Activated CD4-positive, alpha-beta memory T cell treated with anti-CD3 and anti-CD28 coated beads for 36 hours (primary cell): ENCODE measurements at regions of chr5 and their contacts with region 1.

Region 1: GRCh38 chr5:36870399-36871040 is 6.0 kb upstream of the NIPBL start:
- DNase-seq: no peak
- H3K4me3 Mint-ChIP-seq: no peak overlapping the region
- H3K27ac Mint-ChIP-seq: peak overlapping the region; percentile 43
- H3K4me1 Mint-ChIP-seq: peaks cover 28% of the 10 kb centered on the region
- H3K27me3 Mint-ChIP-seq: no peaks in the 10 kb centered on the region

Region 2: GRCh38 chr5:36728697-36729543 is 141.6 kb before region 1 on chr5:
- CTCF ChIA-PET with region 1: interaction called, 8 read pairs
- POLR2A ChIA-PET with region 1: interaction called, 5 read pairs
- intact Hi-C with region 1: loop called (anchors 2 kb)
- DNase-seq: no peak
- H3K4me3 Mint-ChIP-seq: no peak overlapping the region
- H3K27ac Mint-ChIP-seq: no peak overlapping the region
- H3K4me1 Mint-ChIP-seq: peaks cover 4% of the 10 kb centered on the region
- H3K27me3 Mint-ChIP-seq: peaks cover 5% of the 10 kb centered on the region

Region 3: DNA sequence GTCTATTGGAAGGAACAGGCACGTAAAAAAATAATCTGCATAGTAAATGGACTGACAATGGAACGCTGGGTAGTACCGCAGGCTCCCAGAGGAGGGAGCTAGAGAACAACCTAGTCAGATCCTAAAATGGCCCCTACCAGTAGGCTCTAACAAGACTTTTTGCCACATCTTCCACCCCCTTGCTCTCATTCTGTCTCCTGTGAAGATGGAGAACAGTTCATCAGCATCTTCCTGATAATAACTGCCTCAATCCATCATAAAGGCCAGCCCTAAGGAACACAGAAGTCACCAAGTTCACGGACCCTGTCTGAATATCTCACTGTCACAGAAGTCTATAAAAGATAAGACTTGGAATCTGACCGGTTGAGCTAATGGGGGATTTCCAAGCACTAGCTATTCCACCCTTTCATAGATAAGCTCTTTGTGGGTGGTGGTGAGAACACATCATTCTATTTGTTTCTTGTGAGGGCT is 130.7 kb before region 1 on chr5:
- CTCF ChIA-PET with region 1: interaction called, 23 read pairs
- POLR2A ChIA-PET with region 1: interaction called, 3 read pairs
- intact Hi-C with region 1: loop called (anchors 1 kb)
- DNase-seq: peak; percentile 84
- H3K4me3 Mint-ChIP-seq: no peak overlapping the region
- H3K27ac Mint-ChIP-seq: no peak overlapping the region
- H3K4me1 Mint-ChIP-seq: peaks cover 4% of the 10 kb centered on the region
- H3K27me3 Mint-ChIP-seq: peaks cover 25% of the 10 kb centered on the region

Region 4: GRCh38 chr5:36744773-36745589 is 125.5 kb before region 1 on chr5:
- CTCF ChIA-PET with region 1: interaction called, 23 read pairs
- POLR2A ChIA-PET with region 1: interaction called, 3 read pairs
- intact Hi-C with region 1: loop called (anchors 1 kb)
- DNase-seq: peak; percentile 45
- H3K4me3 Mint-ChIP-seq: peak overlapping the region; percentile 78
- H3K27ac Mint-ChIP-seq: no peak overlapping the region
- H3K4me1 Mint-ChIP-seq: peaks cover 8% of the 10 kb centered on the region
- H3K27me3 Mint-ChIP-seq: peaks cover 43% of the 10 kb centered on the region

Region 5: GRCh38 chr5:36820900-36821299 is 49.6 kb before region 1 on chr5:
- CTCF ChIA-PET with region 1: no interaction called
- POLR2A ChIA-PET with region 1: no interaction called
- intact Hi-C with region 1: no loop called
- DNase-seq: no peak
- H3K4me3 Mint-ChIP-seq: no peak overlapping the region
- H3K27ac Mint-ChIP-seq: no peak overlapping the region
- H3K4me1 Mint-ChIP-seq: no peaks in the 10 kb centered on the region
- H3K27me3 Mint-ChIP-seq: peaks cover 17% of the 10 kb centered on the region

Region 6: GRCh38 chr5:36854402-36855140 is 15.9 kb before region 1 on chr5:
- CTCF ChIA-PET with region 1: no interaction called
- POLR2A ChIA-PET with region 1: no interaction called
- intact Hi-C with region 1: no loop called
- DNase-seq: no peak
- H3K4me3 Mint-ChIP-seq: no peak overlapping the region
- H3K27ac Mint-ChIP-seq: no peak overlapping the region
- H3K4me1 Mint-ChIP-seq: no peaks in the 10 kb centered on the region
- H3K27me3 Mint-ChIP-seq: peaks cover 7% of the 10 kb centered on the region

Region 7: GRCh38 chr5:36944607-36945225 is 74.2 kb after region 1 on chr5:
- CTCF ChIA-PET with region 1: interaction called, 14 read pairs
- POLR2A ChIA-PET with region 1: interaction called, 3 read pairs
- intact Hi-C with region 1: loop called (anchors 2 kb)
- DNase-seq: no peak
- H3K4me3 Mint-ChIP-seq: no peak overlapping the region
- H3K27ac Mint-ChIP-seq: no peak overlapping the region
- H3K4me1 Mint-ChIP-seq: peaks cover 40% of the 10 kb centered on the region
- H3K27me3 Mint-ChIP-seq: no peaks in the 10 kb centered on the region

Region 8: GRCh38 chr5:37370864-37371726 is 500.6 kb after region 1 on chr5 and contains the start of gene NUP155:
- CTCF ChIA-PET with region 1: no interaction called
- POLR2A ChIA-PET with region 1: no interaction called
- intact Hi-C with region 1: loop called (anchors 1 kb)
- DNase-seq: peak; percentile 94
- H3K4me3 Mint-ChIP-seq: peak within 1 kb of the TSS; percentile 94
- H3K27ac Mint-ChIP-seq: peak within 1 kb of the TSS; percentile 90
- H3K4me1 Mint-ChIP-seq: peaks cover 24% of the 10 kb centered on the region
- H3K27me3 Mint-ChIP-seq: no peaks in the 10 kb centered on the region
- total RNA-seq, gene NUP155: 74.6 to 75.6 TPM